ENCODE measurements at regions of chr2 and their contacts with region 1.

Region 1: GRCh38 chr2:166867874-166868514 is 20.3 kb upstream of the XIRP2 start:
- DNase-seq: no peak
- H3K4me3 ChIP-seq: no peak overlapping the region
- CTCF ChIP-seq: no peak

Region 2: DNA sequence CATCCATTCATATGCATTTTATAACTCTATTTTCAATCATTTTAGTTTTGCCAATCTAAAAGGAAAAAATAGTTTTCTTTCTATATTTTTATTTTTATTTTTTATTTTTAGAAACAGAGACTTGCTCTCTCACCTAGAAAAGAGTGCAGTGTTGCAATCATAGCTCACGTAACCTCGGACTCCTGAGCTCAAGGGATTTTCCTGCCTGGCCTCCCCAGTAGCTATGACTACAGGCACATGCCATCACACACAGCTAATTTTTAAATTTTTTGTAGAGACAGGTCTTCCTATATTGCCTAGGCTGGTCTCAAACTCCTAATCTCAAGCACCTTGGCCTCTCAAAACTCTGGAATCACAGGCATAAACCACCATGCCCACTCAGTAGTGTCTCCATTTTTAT is 105.2 kb before region 1 on chr2:
- in situ Hi-C with region 1: no loop called
- DNase-seq: no peak
- H3K4me3 ChIP-seq: no peak overlapping the region
- CTCF ChIP-seq: no peak

Region 3: DNA sequence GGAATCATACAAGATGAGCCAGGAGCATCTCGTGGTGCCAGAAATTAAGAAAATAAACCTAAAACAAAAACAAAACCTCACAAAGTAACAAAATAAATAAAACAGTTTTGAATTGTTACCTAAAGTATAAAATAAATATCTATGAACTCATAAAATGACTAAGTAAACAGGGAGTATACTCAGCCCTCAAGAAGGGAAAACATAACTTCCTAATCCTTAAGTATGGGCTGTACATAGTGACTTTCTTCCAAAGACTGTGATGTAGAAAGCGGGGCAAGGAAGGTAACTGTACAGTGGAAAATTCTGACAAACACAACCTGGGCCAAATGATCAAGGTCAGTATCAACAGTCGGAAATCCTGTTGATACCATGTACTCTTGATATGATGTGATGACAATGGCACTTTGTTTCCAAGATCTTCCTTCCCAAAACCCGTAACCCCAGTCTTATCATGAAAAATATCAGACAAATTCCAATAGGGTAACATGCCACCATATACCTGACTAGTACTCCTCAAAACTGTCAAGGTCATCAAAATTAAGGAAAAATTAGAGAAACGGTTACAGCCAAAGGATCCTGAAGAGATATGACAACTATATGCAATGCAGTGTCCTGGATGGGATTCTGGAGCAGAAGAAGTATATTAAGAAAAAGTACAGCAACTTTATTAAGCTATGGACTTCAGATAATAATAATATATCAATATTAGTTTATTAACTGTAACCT is 55.7 kb before region 1 on chr2:
- in situ Hi-C with region 1: loop called (anchors 5 kb)
- DNase-seq: no peak
- H3K4me3 ChIP-seq: no peak overlapping the region
- CTCF ChIP-seq: no peak

Region 4: GRCh38 chr2:166957686-166958085 is 89.7 kb after region 1 on chr2:
- in situ Hi-C with region 1: no loop called
- DNase-seq: no peak
- H3K4me3 ChIP-seq: no peak overlapping the region
- CTCF ChIP-seq: no peak